Heart left ventricle (tissue), 16 donors: ENCODE measurements at regions of chr3 and their contacts with region 1.

Region 1: DNA sequence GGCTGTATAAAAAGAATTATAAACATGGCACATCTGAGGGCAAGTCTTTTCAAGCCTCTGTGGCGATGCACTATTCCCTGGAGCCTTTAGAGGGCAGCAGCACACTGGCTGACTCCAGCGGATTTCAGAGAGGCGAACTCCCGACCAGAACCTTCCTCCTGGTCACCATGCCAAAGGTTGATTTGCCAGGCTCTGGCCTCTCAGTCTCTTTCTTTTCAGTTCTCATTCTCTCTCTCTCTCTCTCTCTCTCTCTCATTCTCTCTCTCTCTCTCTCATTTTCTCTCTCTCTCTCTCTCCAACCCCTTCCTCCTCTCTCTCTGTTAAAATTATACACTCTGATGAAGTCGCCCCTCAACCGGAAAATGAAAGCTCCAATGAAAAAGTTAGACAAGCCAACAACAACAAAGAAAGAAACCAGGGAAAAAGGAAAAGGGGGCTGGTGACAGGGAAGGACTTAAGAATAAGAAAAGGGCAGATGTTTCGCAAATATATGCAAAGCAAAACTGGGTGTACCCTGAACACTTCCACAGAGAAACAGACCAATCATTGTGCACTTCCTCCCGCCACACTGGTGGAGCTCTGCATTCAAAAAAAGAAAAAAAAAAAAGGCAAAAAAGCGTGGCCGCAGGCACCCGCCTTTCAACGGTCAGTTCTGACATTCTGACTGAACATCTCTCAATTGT is 90.2 kb downstream of the TIGIT start:
- DNase-seq: peak; percentile 83 to 88 (median 86)
- ATAC-seq: peak; percentile 73 to 89 (median 86)
- H3K4me3 ChIP-seq: peak overlapping the region in 10 of 12 donors; percentile 31 to 57 (median 44)
- H3K27ac ChIP-seq: peak overlapping the region; percentile 50 to 83 (median 72)
- H3K4me1 ChIP-seq: peaks cover 3 to 53% (median 35%) of the 10 kb centered on the region in 12 donors
- H3K27me3 ChIP-seq: no peaks in the 10 kb centered on the region
- CTCF ChIP-seq: peak; percentile 89 to 98 (median 92)
- POLR2A ChIP-seq: no peak

Region 2: DNA sequence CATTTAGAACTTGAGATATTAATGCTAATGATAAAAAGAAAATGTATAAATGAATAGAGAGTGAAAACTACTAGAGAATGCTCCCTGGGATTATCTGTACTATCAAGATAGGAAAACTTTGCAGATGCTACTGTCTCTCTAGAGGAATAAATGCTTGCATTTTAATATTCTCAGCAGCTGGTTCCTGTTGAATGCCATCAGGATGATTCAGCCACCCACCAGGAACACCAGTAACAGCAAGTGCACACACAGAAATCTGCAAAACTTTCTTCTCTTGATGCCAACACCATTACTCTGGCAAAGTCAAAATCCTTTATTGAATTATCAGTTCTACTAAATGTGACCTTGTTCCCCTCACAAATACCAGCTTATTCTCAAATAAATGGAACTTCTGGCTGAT is 58.2 kb after region 1 on chr3:
- intact Hi-C with region 1: loop called in 1 of 10 experiments (anchors 5 kb)
- DNase-seq: no peak
- ATAC-seq: peak in 2 of 4 donors; percentile 23 to 50
- H3K4me3 ChIP-seq: no peak overlapping the region
- H3K27ac ChIP-seq: no peak overlapping the region
- H3K4me1 ChIP-seq: peaks cover 5 to 78% (median 57%) of the 10 kb centered on the region in 12 donors
- H3K27me3 ChIP-seq: no peaks in the 10 kb centered on the region
- CTCF ChIP-seq: no peak
- POLR2A ChIP-seq: no peak

Region 3: DNA sequence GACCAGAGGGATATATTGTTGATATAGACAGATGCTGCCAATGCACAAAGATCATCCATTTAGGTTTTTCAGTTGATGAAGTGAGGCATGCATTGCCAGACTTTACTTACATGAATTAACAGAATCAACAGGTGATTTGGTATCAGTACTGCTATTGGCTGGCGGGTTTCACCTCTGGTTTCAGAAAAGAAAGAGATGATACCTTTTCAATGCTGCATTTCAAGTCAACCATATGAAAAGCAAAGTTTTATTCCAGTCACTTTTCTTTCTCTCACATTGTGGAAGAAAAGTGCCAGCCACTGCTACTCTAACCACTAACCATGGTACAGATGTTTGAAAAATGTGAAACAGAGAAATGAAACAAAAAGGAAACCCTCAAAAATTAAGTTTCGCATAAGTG is 198.9 kb after region 1 on chr3:
- intact Hi-C with region 1: loop called in 3 of 10 experiments (anchors 10 kb)
- DNase-seq: no peak
- ATAC-seq: no peak
- H3K4me3 ChIP-seq: no peak overlapping the region
- H3K27ac ChIP-seq: peak overlapping the region in 1 of 12 donors; percentile 8
- H3K4me1 ChIP-seq: peaks cover 0 to 40% (median 20%) of the 10 kb centered on the region in 12 donors
- H3K27me3 ChIP-seq: no peaks in the 10 kb centered on the region
- CTCF ChIP-seq: no peak
- POLR2A ChIP-seq: no peak

Region 4: DNA sequence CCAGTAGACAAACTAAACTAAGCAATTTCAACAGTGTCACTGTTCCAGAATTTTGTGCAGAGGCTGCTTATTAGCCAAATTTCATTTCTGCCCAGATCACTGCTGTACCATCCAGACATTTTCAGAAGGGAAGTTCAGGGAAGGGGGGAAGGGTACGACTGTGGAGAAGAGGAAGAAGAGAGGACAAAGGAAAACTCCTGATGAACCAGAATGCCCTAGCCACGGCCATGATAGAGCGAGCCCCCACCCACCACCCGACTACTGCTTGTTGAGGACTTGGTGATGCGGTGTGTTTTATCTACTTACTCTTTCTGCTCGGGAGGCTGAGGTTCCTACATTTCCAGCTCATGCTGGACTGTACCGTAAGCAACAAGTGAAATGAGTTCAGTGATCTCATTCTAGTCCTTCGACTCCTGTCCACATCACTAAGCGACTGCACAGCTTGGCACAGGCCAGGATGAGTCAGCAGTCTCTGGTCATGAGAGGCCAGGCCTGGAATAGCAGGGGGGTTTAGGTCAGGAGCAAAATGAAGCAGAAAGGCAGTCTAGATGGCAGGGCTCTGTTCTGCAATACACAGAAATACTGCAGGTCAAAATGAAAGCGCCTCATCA is 240.7 kb after region 1 on chr3:
- intact Hi-C with region 1: loop called in 2 of 10 experiments (anchors 2 to 10 kb)
- DNase-seq: peak; percentile 91 to 98 (median 93)
- ATAC-seq: peak; percentile 94 to 97 (median 95)
- H3K4me3 ChIP-seq: peak overlapping the region in 11 of 12 donors; percentile 27 to 61 (median 54)
- H3K27ac ChIP-seq: peak overlapping the region; percentile 93 to 99 (median 95)
- H3K4me1 ChIP-seq: peaks cover 0 to 79% (median 57%) of the 10 kb centered on the region in 12 donors
- H3K27me3 ChIP-seq: no peaks in the 10 kb centered on the region
- CTCF ChIP-seq: no peak
- POLR2A ChIP-seq: peak in 1 of 2 donors; percentile 79

Region 5: DNA sequence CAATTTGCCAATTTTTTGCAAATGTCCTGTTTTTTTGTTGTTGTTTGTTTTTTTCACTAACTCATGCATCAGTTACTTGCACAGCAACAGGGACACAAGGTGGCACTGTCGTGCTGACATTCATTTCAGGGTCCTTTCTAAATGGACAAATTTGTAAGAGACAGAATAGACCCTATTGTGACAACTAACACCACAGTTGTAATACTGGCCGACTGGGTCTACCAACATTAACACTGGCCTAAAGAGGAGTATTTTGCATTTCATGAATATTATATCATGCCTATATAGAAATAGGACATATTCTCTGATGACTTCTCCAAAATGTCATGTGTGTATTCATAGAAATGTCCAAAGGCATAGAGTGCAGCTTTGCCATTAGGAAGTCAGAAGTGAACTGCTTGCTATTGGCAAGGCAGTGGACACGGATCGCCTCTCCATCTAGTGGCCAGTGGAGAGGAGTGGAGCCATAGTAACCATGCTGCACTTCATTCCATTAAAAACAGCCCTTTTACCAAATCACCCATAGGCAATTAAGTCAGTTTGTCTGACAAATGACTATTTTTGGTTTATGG is 708.3 kb after region 1 on chr3:
- intact Hi-C with region 1: loop called in 4 of 10 experiments (anchors 5 to 10 kb)
- DNase-seq: peak; percentile 50 to 79 (median 70)
- ATAC-seq: peak; percentile 95 to 98 (median 98)
- H3K4me3 ChIP-seq: no peak overlapping the region
- H3K27ac ChIP-seq: peak overlapping the region in 5 of 12 donors; percentile 5 to 41 (median 16)
- H3K4me1 ChIP-seq: peaks cover 0 to 65% (median 20%) of the 10 kb centered on the region in 12 donors
- H3K27me3 ChIP-seq: no peaks in the 10 kb centered on the region
- CTCF ChIP-seq: peak; percentile 50 to 82 (median 68)
- POLR2A ChIP-seq: no peak

Region 6: GRCh38 chr3:115147329-115148141 is 763.5 kb after region 1 on chr3:
- intact Hi-C with region 1: loop called in 1 of 10 experiments (anchors 5 kb)
- DNase-seq: peak; percentile 98 to 99 (median 99)
- ATAC-seq: peak; percentile 90 to 95 (median 94)
- H3K4me3 ChIP-seq: peak overlapping the region; percentile 50 to 98 (median 86)
- H3K27ac ChIP-seq: peak overlapping the region; percentile 96 to 100 (median 98)
- H3K4me1 ChIP-seq: peaks cover 0 to 27% (median 12%) of the 10 kb centered on the region in 12 donors
- H3K27me3 ChIP-seq: no peaks in the 10 kb centered on the region
- CTCF ChIP-seq: no peak
- POLR2A ChIP-seq: peak; percentile 60 to 87

Region 7: DNA sequence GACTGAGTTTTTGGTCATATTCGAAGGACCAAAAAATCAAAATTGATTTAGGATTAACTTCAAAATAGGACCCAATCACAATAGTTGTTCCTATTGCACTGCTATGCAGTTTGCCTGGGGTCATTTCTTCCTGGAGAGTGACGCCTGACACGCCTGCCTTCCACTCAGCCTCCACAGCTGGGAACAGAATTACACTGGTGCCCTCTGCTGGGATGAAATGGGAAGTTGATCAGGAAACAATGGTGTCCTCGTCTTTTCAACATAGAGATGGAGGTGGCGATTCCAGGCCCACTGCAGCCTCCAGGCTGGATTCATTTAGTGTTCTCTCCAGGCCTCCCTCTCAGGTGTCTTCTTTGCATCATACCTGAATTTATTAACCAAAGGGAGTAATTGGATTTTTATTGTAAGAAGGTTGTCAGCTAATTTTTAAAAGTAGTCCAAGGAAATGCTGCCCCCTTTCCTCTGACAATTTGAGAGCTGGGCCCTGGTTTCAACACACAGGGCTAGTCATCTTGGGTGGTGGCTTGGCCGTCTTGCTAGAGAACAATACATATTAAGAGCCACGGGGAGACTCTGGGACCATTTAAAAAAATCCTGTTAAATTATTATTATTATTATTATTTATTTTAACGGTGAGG is 1309.0 kb after region 1 on chr3:
- intact Hi-C with region 1: loop called in 1 of 10 experiments (anchors 10 kb)
- DNase-seq: peak; percentile 66 to 75 (median 71)
- ATAC-seq: peak; percentile 80 to 98 (median 96)
- H3K4me3 ChIP-seq: no peak overlapping the region
- H3K27ac ChIP-seq: peak overlapping the region in 1 of 12 donors; percentile 61
- H3K4me1 ChIP-seq: peaks cover 0 to 14% (median 0%) of the 10 kb centered on the region in 12 donors
- H3K27me3 ChIP-seq: no peaks in the 10 kb centered on the region
- CTCF ChIP-seq: peak; percentile 69 to 92 (median 83)
- POLR2A ChIP-seq: no peak